ENCODE measurements at regions of chr19 and their contacts with region 1.

Region 1: DNA sequence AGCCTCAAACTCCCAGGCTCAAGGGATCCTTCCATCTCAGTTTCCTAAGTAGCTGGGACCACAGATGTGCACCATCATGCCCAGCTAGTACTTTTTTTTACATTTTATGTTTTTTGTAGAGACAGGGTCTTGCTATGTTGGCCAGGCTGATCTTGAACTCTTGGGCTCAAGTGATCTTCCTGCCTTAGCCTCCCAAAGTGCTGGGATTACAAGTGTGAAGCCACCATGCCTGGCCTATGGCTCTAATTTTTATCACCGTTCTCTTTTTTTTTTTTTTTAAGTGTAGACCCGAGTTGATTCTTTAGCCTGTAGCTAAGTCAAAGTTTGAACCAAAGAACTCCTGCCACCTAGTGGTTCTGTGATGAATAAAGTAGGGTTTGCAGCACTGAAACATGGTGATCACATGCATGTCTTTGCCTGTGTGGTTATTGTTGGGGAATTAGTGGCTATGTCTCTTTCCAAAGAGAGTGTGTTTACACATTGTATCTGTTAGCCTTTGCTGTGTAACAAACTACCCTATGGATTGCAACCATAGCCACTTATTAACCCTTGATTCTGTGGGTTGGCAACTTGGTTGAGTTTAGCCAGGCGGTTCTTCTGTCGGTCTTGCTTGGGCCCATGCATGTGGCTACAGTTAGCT is 11.6 kb downstream of the NFILZ start:
- DNase-seq: no peak
- H3K4me3 ChIP-seq: no peak overlapping the region
- H3K27me3 ChIP-seq: no peaks in the 10 kb centered on the region
- CTCF ChIP-seq: peak; percentile 59

Region 2: GRCh38 chr19:8609279-8610040 is 32.6 kb before region 1 on chr19:
- CTCF ChIA-PET with region 1: interaction called, 11 read pairs
- POLR2A ChIA-PET with region 1: no interaction called
- DNase-seq: no peak
- H3K4me3 ChIP-seq: peak overlapping the region; percentile 69
- H3K27me3 ChIP-seq: no peaks in the 10 kb centered on the region
- CTCF ChIP-seq: peak; percentile 49

Region 3: GRCh38 chr19:8615813-8616596 is 26.0 kb before region 1 on chr19:
- CTCF ChIA-PET with region 1: interaction called, 26 read pairs
- POLR2A ChIA-PET with region 1: no interaction called
- DNase-seq: no peak
- H3K4me3 ChIP-seq: no peak overlapping the region
- H3K27me3 ChIP-seq: no peaks in the 10 kb centered on the region
- CTCF ChIP-seq: peak; percentile 92

Region 4: GRCh38 chr19:8654591-8655339 is 12.7 kb after region 1 on chr19:
- CTCF ChIA-PET with region 1: interaction called, 11 read pairs
- POLR2A ChIA-PET with region 1: no interaction called
- DNase-seq: no peak
- H3K4me3 ChIP-seq: 0 out of 2 replicates have a peak overlapping the region, but pooled peaks have one; percentile 11
- H3K27me3 ChIP-seq: no peaks in the 10 kb centered on the region
- CTCF ChIP-seq: peak; percentile 95

Region 5: DNA sequence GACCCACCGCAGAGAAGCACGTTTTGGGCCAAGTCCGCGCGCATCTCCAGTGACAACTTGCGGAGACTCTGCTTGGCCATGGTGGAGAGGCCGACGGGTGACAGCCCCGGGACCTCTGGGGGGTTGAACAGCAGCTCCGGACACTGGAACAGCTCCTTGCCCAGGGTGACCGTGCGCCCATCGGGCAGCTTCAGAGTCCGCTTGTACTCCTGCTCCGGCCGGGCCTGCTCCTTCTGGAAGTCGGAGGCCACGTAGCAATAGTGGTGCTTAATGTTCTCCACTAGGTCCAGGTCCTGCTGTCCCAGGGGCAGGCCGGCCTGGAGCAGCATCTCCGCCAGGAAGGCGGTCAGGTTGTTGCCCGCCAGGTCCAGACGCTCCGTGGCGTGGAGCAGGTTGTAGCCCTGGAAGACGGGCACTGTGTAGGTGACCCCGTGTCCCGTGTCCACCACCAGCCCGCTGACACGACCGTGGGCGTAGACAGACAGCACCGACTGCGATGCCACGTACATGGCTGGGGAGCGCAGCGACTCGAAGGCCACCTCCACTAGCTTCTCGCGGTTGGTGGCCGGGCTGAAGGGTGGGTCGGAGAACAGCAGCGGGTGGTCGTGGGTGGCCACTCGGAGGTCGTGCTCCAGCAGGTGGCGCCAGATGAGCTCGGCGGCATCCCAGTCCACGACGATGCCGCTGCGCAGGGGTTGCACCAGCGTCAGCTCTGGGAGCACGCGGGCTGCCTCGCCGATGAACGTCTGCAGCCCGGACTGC is 55.8 kb after region 1 on chr19:
- CTCF ChIA-PET with region 1: no interaction called
- POLR2A ChIA-PET with region 1: no interaction called
- DNase-seq: no peak
- H3K4me3 ChIP-seq: no peak overlapping the region
- H3K27me3 ChIP-seq: no peaks in the 10 kb centered on the region
- CTCF ChIP-seq: no peak